ENCODE measurements at regions of chr11 and their contacts with region 1.

Region 1: GRCh38 chr11:18588297-18589252 is at the start of gene UEVLD:
- DNase-seq: peak; percentile 93
- ATAC-seq: peak; percentile 97 to 98
- total RNA-seq, gene UEVLD: 16.1 to 17.6 TPM

Region 2: GRCh38 chr11:18721561-18722292 is 133.2 kb after region 1 on chr11:
- intact Hi-C with region 1: loop called in 1 of 2 experiments (anchors 5 kb)
- DNase-seq: no peak
- ATAC-seq: peak; percentile 78 to 80